Naive thymus-derived CD4-positive, alpha-beta T cell (primary cell): ENCODE measurements at regions of chr1 and their contacts with region 1.

Region 1: DNA sequence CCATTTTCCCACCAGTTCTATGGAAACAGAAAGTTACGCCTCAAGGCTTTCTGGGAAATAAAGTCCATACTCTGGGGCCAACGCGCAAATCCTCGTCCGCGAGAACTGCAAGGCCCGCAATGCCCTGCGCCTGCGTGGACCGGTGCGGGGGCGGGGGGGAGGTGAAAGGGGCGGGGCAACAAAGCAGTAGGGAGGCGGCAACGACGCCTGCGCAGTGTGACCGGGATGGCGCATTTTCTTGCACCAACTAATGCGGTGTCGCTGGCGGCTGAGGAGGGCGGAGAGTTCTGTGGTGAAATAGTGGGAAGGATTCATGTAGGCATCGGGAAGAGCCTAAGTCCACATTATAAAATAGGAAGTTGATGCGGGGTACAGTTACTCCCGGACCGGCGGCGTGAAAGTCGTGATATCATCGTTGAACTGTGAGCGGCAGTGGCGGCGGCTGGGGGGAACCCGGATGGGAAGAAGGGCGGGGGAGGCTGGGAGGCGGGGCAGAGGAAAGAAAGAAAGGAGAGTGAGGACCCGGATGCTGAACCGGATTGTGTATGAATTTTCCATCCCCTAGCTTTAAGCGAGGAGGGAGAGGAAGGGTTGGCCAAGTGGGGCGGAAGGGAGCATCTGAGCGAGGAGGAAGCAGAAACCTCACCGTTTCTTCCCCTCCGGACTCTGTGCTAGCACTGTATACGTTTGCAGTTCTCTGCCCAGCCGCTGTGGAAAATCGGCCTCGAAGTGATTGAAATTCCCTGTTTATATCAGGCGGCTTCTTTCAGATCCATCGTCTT is at the start of gene GGPS1:
- DNase-seq: peak; percentile 95 to 99 (median 97)
- ATAC-seq: peak; percentile 87
- H3K4me3 ChIP-seq: peak within 1 kb of the TSS; percentile 82
- H3K4me3 Mint-ChIP-seq: no peak within 1 kb of the TSS
- H3K27ac ChIP-seq: peak within 1 kb of the TSS; percentile 100
- H3K27ac Mint-ChIP-seq: peak within 1 kb of the TSS in 2 of 9 donors; percentile 91 to 94
- H3K4me1 ChIP-seq: peaks cover 40 to 54% of the 10 kb centered on the region in 2 donors
- H3K4me1 Mint-ChIP-seq: peaks cover 23 to 42% (median 31%) of the 10 kb centered on the region in 7 donors
- H3K27me3 ChIP-seq: no peaks in the 10 kb centered on the region
- H3K27me3 Mint-ChIP-seq: no peaks in the 10 kb centered on the region
- total RNA-seq, gene GGPS1: 26.5 to 51.7 (median 30.2) TPM

Region 2: DNA sequence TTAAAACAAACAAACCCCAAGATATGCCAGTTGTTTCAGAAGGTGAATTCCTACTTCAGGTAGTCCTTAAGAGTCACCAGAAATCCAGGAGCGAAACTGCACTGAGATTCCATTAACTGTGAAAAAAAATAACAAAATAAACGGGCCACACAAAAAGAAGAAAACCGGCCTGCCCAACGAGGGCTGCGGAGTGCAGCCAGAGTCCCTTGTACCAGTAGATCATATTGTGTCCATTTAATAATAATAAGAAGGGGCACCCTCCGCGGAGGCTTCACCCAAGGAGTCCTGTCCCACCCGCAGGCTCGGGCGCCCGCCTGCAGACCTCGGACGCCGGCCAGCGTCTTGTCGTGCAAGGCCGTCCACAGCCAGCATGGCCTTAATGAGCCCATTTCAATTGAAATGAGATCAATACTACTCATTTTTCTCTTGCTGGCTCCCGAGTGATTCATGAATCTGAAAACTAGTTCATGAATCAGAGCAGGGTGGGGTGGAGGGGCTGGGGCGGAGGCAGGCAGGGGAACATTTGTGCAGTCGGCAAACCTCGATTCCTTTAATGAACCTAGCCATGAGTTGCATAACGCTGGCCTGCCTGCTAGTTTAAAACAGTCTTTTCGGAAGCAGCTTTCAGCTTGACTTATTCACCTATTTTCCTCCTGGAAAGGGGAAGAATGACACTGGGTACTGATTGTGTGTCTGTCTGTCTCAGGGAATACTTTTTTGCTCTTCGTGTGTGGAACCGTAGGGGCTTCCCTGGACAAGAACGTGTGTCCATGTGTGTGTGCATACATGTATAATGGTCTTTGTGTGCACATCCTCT is 605.4 kb before region 1 on chr1:
- CTCF ChIA-PET with region 1: no interaction called
- POLR2A ChIA-PET with region 1: no interaction called
- intact Hi-C with region 1: loop called in 1 of 2 experiments (anchors 1 kb)
- DNase-seq: peak in 2 of 9 donors; percentile 51 to 68
- ATAC-seq: peak; percentile 12
- H3K4me3 ChIP-seq: peak overlapping the region; percentile 52
- H3K4me3 Mint-ChIP-seq: peak overlapping the region; percentile 51 to 85 (median 82)
- H3K27ac ChIP-seq: peak overlapping the region; percentile 95
- H3K27ac Mint-ChIP-seq: peak overlapping the region; percentile 87 to 99 (median 98)
- H3K4me1 ChIP-seq: peaks cover 39 to 46% of the 10 kb centered on the region in 2 donors
- H3K4me1 Mint-ChIP-seq: peaks cover 46 to 95% (median 84%) of the 10 kb centered on the region in 7 donors
- H3K27me3 ChIP-seq: no peaks in the 10 kb centered on the region
- H3K27me3 Mint-ChIP-seq: no peaks in the 10 kb centered on the region

Region 3: GRCh38 chr1:235128456-235129328 is 199.9 kb before region 1 on chr1 and contains the start of gene TOMM20:
- CTCF ChIA-PET with region 1: no interaction called
- POLR2A ChIA-PET with region 1: interaction called, 4 read pairs
- intact Hi-C with region 1: loop called (anchors 1 kb)
- DNase-seq: peak; percentile 91 to 97 (median 95)
- ATAC-seq: peak; percentile 97
- H3K4me3 ChIP-seq: peak within 1 kb of the TSS; percentile 98
- H3K4me3 Mint-ChIP-seq: peak within 1 kb of the TSS; percentile 88 to 99 (median 96)
- H3K27ac ChIP-seq: peak within 1 kb of the TSS; percentile 94
- H3K27ac Mint-ChIP-seq: peak within 1 kb of the TSS; percentile 93 to 99 (median 98)
- H3K4me1 ChIP-seq: peaks cover 22 to 24% of the 10 kb centered on the region in 2 donors
- H3K4me1 Mint-ChIP-seq: peaks cover 17 to 55% (median 42%) of the 10 kb centered on the region in 7 donors
- H3K27me3 ChIP-seq: no peaks in the 10 kb centered on the region
- H3K27me3 Mint-ChIP-seq: no peaks in the 10 kb centered on the region
- total RNA-seq, gene TOMM20: 88.0 to 124 (median 100) TPM

Region 4: DNA sequence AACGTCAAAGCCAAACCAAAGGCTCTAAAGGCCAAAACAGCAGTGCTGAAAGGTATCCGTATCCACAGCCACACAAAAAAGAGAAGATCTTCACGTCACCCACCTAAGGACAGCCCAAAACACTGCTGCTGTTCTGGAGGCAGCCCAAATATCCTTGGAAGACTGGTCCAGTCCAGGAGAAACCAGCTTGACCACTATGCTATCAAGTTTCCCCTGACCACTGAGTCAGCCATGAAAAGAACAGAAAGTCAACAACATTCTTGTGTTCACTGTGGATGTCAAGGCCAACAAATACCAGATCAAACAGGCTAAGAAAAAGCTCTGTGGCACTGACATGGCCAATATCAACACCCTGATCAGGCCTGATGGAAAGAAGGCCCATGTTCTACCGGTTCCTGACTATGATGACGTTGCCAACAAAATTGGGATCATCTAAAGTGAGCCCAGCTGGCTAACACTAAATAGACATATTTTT is 32.6 kb before region 1 on chr1:
- CTCF ChIA-PET with region 1: no interaction called
- POLR2A ChIA-PET with region 1: interaction called, 6 read pairs
- intact Hi-C with region 1: loop called (anchors 1 kb)
- DNase-seq: no peak
- ATAC-seq: no peak
- H3K4me3 ChIP-seq: no peak overlapping the region
- H3K4me3 Mint-ChIP-seq: peak overlapping the region in 9 of 10 donors; percentile 4 to 81 (median 60)
- H3K27ac ChIP-seq: no peak overlapping the region
- H3K27ac Mint-ChIP-seq: peak overlapping the region; percentile 41 to 92 (median 79)
- H3K4me1 ChIP-seq: peaks cover 38 to 47% of the 10 kb centered on the region in 2 donors
- H3K4me1 Mint-ChIP-seq: peaks cover 33 to 77% (median 65%) of the 10 kb centered on the region in 7 donors
- H3K27me3 ChIP-seq: no peaks in the 10 kb centered on the region
- H3K27me3 Mint-ChIP-seq: no peaks in the 10 kb centered on the region

Region 5: GRCh38 chr1:235415008-235415904 is 86.7 kb after region 1 on chr1:
- CTCF ChIA-PET with region 1: no interaction called
- POLR2A ChIA-PET with region 1: interaction called, 3 read pairs
- intact Hi-C with region 1: loop called (anchors 1 to 2 kb)
- DNase-seq: peak in 8 of 9 donors; percentile 24 to 61 (median 46)
- ATAC-seq: peak; percentile 87
- H3K4me3 ChIP-seq: no peak overlapping the region
- H3K4me3 Mint-ChIP-seq: no peak overlapping the region
- H3K27ac ChIP-seq: no peak overlapping the region
- H3K27ac Mint-ChIP-seq: no peak overlapping the region
- H3K4me1 ChIP-seq: no peaks in the 10 kb centered on the region
- H3K4me1 Mint-ChIP-seq: peaks cover 0 to 15% (median 6%) of the 10 kb centered on the region in 7 donors
- H3K27me3 ChIP-seq: no peaks in the 10 kb centered on the region
- H3K27me3 Mint-ChIP-seq: no peaks in the 10 kb centered on the region

Region 6: DNA sequence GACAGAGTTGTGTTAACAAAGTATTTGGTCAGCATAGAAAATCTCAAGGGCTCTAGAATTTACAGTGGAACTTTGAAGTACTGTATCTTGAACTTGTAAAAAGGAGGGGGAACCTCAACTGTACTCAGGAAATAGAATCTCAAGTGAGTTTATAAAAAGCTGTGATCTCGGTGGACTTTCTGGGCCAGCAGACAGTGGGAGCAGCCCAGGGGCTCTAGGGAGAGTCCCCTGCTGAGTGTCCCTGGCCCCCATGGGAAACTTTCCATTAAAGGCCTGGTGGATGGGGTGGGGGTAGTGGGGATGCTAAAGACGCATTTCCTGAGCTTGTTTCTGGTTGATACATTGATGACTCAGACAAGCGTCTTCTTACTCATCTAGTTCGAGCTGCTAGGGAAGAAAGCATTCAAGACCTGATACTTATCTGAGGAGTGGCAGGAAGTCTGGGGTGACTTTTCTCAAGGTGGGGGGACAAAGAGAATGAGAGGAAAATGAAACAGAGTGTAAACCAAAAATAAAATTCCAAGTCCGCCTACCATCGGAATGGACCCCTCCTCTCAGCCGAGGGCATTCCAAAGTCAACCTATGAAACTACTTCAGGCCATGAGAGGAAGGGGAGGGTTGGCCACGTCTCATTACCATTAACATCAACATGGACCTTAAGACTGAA is 670.8 kb after region 1 on chr1:
- CTCF ChIA-PET with region 1: no interaction called
- POLR2A ChIA-PET with region 1: no interaction called
- intact Hi-C with region 1: loop called in 1 of 2 experiments (anchors 2 kb)
- DNase-seq: peak in 8 of 9 donors; percentile 7 to 75 (median 37)
- ATAC-seq: peak; percentile 90
- H3K4me3 ChIP-seq: no peak overlapping the region
- H3K4me3 Mint-ChIP-seq: peak overlapping the region in 9 of 10 donors; percentile 0 to 71 (median 55)
- H3K27ac ChIP-seq: peak overlapping the region; percentile 22
- H3K27ac Mint-ChIP-seq: peak overlapping the region; percentile 19 to 97 (median 80)
- H3K4me1 ChIP-seq: peaks cover 10 to 31% of the 10 kb centered on the region in 2 donors
- H3K4me1 Mint-ChIP-seq: peaks cover 10 to 71% (median 20%) of the 10 kb centered on the region in 7 donors
- H3K27me3 ChIP-seq: no peaks in the 10 kb centered on the region
- H3K27me3 Mint-ChIP-seq: no peaks in the 10 kb centered on the region